Dendritic cell treated with granulocyte-macrophage colony-stimulating factor and Interleukin-4, amounts not matched to agents 40 ng/mL and 50 ng/mL, for 4 days (primary cell): ENCODE measurements at regions of chr5 and their contacts with region 1.

Region 1: GRCh38 chr5:178732281-178732680 is 1.8 kb upstream of the ZNF354A start:
- H3K4me3 Mint-ChIP-seq: no peak overlapping the region
- H3K27ac Mint-ChIP-seq: no peak overlapping the region
- H3K4me1 Mint-ChIP-seq: peaks cover 4% of the 10 kb centered on the region
- H3K27me3 Mint-ChIP-seq: peaks cover 3% of the 10 kb centered on the region

Region 2: GRCh38 chr5:178208540-178209227 is 523.6 kb before region 1 on chr5:
- intact Hi-C with region 1: no loop called
- H3K4me3 Mint-ChIP-seq: no peak overlapping the region
- H3K27ac Mint-ChIP-seq: no peak overlapping the region
- H3K4me1 Mint-ChIP-seq: peaks cover 41% of the 10 kb centered on the region
- H3K27me3 Mint-ChIP-seq: no peaks in the 10 kb centered on the region

Region 3: GRCh38 chr5:178279725-178280438 is 452.4 kb before region 1 on chr5:
- intact Hi-C with region 1: loop called (anchors 5 kb)
- H3K4me3 Mint-ChIP-seq: no peak overlapping the region
- H3K27ac Mint-ChIP-seq: no peak overlapping the region
- H3K4me1 Mint-ChIP-seq: peaks cover 11% of the 10 kb centered on the region
- H3K27me3 Mint-ChIP-seq: peaks cover 19% of the 10 kb centered on the region

Region 4: GRCh38 chr5:178838695-178839685 is 106.7 kb after region 1 on chr5:
- intact Hi-C with region 1: loop called (anchors 1 kb)
- H3K4me3 Mint-ChIP-seq: no peak overlapping the region
- H3K27ac Mint-ChIP-seq: no peak overlapping the region
- H3K4me1 Mint-ChIP-seq: no peaks in the 10 kb centered on the region
- H3K27me3 Mint-ChIP-seq: peaks cover 4% of the 10 kb centered on the region

Region 5: DNA sequence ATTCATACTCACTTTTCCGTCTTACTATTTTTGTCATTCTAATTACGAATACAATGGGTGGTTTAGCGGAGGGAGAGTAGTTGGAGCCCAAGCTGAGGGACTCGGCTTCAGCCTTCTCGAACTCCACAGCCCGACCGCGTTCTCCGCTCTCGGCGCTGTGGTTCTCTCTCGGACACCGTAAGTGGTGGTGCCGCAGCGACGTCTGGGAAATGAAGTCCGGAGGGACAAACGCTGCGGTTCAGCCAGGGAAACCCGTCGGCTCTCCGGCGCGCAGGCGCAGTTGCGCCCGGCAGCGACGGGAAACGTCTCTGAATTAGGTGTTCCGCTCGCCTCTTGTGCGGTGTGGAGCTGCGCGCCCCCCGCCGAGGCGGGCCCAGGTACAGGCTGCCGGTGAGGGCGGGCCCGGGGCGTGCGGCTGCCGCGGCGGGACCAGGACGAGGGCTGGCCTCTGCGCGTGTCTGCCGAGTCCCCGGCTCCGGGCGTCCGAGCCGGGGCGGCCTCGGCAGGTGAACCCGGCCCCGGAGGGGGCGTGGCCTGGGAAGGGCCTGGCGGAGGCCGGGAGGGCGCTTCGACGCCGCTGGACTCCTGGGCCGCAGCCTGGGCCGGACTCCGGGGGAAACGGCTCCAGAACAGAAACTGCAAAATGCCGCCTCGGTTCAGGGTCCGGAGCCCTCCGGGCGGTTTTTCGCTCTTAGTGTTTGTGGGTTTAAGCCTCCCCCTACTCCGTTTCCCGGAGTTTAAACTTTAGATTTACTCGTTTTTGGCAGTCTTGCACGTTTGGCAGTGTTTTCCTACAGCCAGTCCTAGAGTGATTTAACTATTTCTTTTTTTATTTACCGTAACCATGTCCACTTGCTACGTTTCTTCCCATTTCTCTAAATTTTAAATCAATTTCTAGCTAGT is 291.5 kb after region 1 on chr5 and contains the start of gene ZNF879:
- intact Hi-C with region 1: loop called (anchors 5 kb)
- H3K4me3 Mint-ChIP-seq: peak within 1 kb of the TSS; percentile 87
- H3K27ac Mint-ChIP-seq: peak within 1 kb of the TSS; percentile 75
- H3K4me1 Mint-ChIP-seq: peaks cover 15% of the 10 kb centered on the region
- H3K27me3 Mint-ChIP-seq: peaks cover 7% of the 10 kb centered on the region

Region 6: GRCh38 chr5:179495906-179496455 is 763.7 kb after region 1 on chr5:
- intact Hi-C with region 1: loop called (anchors 5 kb)
- H3K4me3 Mint-ChIP-seq: no peak overlapping the region
- H3K27ac Mint-ChIP-seq: no peak overlapping the region
- H3K4me1 Mint-ChIP-seq: peaks cover 5% of the 10 kb centered on the region
- H3K27me3 Mint-ChIP-seq: peaks cover 10% of the 10 kb centered on the region